BJ (cell line): ENCODE measurements at regions of chr6 and their contacts with region 1.

Region 1: DNA sequence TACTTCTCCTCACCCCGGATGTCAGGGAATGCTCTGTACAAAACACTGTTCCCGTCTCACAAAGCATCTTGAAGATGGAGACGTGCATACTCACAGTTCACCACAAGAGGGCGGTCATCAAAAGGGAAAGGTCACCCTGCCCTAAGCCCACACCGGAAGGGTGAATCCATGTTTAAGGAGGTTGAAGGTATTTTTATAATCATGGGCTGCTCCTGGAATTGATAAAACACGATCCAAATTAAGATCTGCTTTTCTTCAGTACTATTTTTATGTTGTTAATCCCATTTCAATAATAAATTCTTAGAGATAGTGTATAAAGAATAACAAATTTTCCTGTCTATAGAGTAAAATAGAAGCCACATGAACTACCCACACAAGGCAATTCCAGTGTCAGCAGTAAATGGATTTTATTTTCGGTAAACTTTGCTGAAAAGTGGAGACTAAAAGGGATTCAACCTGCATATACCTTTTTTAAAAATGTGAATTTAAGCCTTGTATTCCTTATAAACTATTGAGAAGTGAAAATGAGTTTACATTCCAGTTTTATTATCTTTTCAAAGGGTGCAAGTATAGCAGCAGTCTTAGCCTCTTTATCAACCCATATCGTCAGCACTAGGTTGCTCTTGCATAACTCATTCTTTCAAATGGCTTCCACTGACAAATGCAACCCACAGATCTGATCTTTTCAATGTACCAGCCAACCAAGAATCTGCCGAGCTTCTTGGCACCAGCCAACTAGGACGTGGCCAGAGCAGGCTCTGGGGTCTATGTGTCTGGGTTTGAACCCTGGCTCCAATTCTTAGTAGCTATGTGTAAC is 79.7 kb upstream of the MBOAT1 start:
- DNase-seq: peak; percentile 16
- H3K4me3 ChIP-seq: no peak overlapping the region
- H3K27me3 ChIP-seq: no peaks in the 10 kb centered on the region
- CTCF ChIP-seq: peak; percentile 90

Region 2: DNA sequence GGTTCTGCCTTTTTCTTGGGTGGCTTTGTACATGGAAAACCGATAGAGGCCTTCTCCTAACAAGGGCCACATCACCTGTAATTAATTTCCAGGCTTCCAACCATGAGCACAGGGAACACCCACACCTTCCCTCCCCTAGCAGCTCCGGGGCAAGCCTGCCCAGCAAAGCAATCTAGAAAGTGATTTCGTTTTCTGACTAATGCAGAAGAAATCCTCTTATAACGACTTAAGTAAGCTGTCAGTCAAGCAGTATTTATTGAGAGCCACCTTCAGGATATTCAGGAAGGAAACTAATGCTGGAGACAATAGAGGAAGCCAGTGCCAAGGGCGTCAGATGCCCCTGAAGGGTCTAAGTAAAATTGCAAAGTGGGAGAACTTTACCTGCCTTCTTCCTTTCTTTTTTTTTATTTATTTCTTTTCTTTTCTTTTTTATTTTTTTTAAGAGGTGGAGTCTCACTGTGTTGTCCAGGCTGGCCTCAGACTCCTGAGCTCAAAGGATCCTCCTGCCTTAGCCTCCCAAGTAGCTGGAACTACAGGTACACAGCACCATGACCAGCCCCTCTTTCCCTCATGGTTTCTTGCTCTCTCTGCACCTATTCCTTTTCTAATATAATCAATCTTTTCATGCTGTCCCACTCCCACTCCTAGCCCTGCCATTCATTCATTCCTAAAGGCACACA is 12.2 kb before region 1 on chr6:
- CTCF ChIA-PET with region 1: interaction called, 15 read pairs
- POLR2A ChIA-PET with region 1: no interaction called
- DNase-seq: no peak
- H3K4me3 ChIP-seq: no peak overlapping the region
- H3K27me3 ChIP-seq: peaks cover 3% of the 10 kb centered on the region
- CTCF ChIP-seq: no peak

Region 3: GRCh38 chr6:20534295-20535262 is 242.6 kb after region 1 on chr6 and contains the start of gene CDKAL1:
- CTCF ChIA-PET with region 1: interaction called, 24 read pairs
- POLR2A ChIA-PET with region 1: no interaction called
- DNase-seq: peak; percentile 75
- H3K4me3 ChIP-seq: peak within 1 kb of the TSS; percentile 53
- H3K27me3 ChIP-seq: no peaks in the 10 kb centered on the region
- CTCF ChIP-seq: no peak
- polyA plus RNA-seq, gene CDKAL1: 3.8 and 6.5 TPM in 2 replicates